IMR-90 (cell line): ENCODE measurements at regions of chr18 and their contacts with region 1.

Region 1: GRCh38 chr18:31710826-31711225 is 26.4 kb upstream of the B4GALT6 start:
- DNase-seq: no peak
- ATAC-seq: no peak
- H3K4me3 ChIP-seq: no peak overlapping the region
- H3K27ac ChIP-seq: no peak overlapping the region
- H3K4me1 ChIP-seq: no peaks in the 10 kb centered on the region
- H3K27me3 ChIP-seq: no peaks in the 10 kb centered on the region
- CTCF ChIP-seq: no peak
- POLR2A ChIP-seq: no peak
- RAD21 ChIP-seq: no peak

Region 2: DNA sequence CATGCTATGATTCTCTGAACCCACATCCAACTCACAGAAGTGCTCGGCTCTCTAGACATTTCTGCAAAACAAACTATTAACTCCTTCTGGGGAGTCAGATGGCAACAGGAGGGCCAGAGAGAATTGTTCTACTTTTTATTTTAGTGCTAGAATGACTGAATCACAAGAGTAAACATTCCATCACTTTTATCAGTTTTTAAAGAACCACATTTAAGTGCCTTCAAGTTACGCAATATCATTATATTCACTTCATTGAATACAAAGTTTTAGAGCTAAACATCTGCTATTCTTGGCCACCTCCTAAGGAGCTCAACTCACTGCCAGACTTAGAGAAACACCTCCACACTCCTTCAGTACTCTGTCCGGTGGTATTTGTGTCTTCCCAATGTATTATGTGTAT is 48.9 kb before region 1 on chr18:
- CTCF ChIA-PET with region 1: no interaction called
- POLR2A ChIA-PET with region 1: no interaction called
- dilution Hi-C with region 1: no loop called
- in situ Hi-C with region 1: no loop called
- intact Hi-C with region 1: loop called (anchors 5 kb)
- DNase-seq: peak; percentile 35
- ATAC-seq: no peak
- H3K4me3 ChIP-seq: no peak overlapping the region
- H3K27ac ChIP-seq: no peak overlapping the region
- H3K4me1 ChIP-seq: no peaks in the 10 kb centered on the region
- H3K27me3 ChIP-seq: no peaks in the 10 kb centered on the region
- CTCF ChIP-seq: no peak
- POLR2A ChIP-seq: no peak
- RAD21 ChIP-seq: no peak

Region 3: DNA sequence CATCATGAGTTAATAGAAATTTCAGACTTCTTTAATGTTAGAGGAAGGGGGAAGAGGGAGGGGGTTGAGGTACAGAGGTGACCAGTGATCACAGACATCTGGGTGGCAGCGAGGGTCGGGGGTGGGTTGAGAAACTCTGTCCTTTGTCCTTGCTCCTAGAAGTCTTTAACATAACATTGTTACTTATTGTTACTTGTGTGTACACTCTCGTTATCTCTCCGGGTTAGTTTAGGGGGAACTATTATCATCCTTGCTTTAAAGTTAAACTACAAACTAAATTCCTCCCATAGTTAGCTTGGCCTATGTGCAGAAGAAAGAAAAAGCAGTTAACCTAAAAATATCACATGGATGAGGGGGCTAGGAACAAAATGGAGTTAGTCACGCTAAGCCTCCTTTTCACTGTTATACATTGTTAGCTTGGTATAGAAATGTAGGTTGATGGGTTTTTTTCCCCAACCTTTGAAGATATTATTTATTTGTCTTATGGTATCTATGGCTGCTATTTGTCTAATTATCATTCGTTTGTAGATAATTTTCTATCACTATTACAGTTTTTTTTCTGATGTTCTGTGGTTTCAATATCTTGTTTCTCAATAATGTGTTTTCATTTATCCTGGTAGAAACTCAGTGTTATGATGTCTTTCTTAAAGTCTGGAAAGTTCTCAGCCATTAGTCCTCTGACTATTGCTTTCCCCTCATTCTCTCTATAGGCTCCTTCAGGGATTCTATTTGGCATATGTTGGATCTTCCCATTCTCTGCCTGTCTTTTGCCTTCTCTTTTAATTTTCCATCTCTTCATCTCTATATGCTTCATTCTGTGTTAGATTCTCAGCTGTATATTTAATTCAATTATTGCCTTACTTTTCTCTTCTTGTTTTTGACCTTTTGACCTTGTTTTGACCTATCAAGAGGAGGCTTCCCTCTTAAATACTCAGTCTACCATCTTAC is 13.2 kb before region 1 on chr18:
- CTCF ChIA-PET with region 1: no interaction called
- POLR2A ChIA-PET with region 1: interaction called, 11 read pairs
- dilution Hi-C with region 1: no loop called
- in situ Hi-C with region 1: no loop called
- intact Hi-C with region 1: no loop called
- DNase-seq: no peak
- ATAC-seq: no peak
- H3K4me3 ChIP-seq: no peak overlapping the region
- H3K27ac ChIP-seq: no peak overlapping the region
- H3K4me1 ChIP-seq: no peaks in the 10 kb centered on the region
- H3K27me3 ChIP-seq: no peaks in the 10 kb centered on the region
- CTCF ChIP-seq: no peak
- POLR2A ChIP-seq: no peak
- RAD21 ChIP-seq: no peak

Region 4: GRCh38 chr18:31942999-31943865 is 232.4 kb after region 1 on chr18 and contains the start of gene TRAPPC8:
- CTCF ChIA-PET with region 1: no interaction called
- POLR2A ChIA-PET with region 1: no interaction called
- dilution Hi-C with region 1: no loop called
- in situ Hi-C with region 1: no loop called
- intact Hi-C with region 1: no loop called
- DNase-seq: peak; percentile 98
- ATAC-seq: peak; percentile 95
- H3K4me3 ChIP-seq: peak within 1 kb of the TSS; percentile 89
- H3K27ac ChIP-seq: peak within 1 kb of the TSS; percentile 86
- H3K4me1 ChIP-seq: no peaks in the 10 kb centered on the region
- H3K27me3 ChIP-seq: no peaks in the 10 kb centered on the region
- CTCF ChIP-seq: no peak
- POLR2A ChIP-seq: peak; percentile 89
- RAD21 ChIP-seq: no peak
- total RNA-seq, gene TRAPPC8: 50.0 and 54.3 TPM in 2 replicates